ENCODE measurements at regions of chr7 and their contacts with region 1.

Region 1: GRCh38 chr7:1137510-1138167 is 22.4 kb downstream of the ZFAND2A start:
- H3K4me3 ChIP-seq: peak overlapping the region; percentile 74
- H3K27ac ChIP-seq: peak overlapping the region; percentile 13; the same call in 1 of the 2 replicates
- H3K4me1 ChIP-seq: no peaks in the 10 kb centered on the region; the same call in 1 of the 2 replicates
- CTCF ChIP-seq: no peak

Region 2: DNA sequence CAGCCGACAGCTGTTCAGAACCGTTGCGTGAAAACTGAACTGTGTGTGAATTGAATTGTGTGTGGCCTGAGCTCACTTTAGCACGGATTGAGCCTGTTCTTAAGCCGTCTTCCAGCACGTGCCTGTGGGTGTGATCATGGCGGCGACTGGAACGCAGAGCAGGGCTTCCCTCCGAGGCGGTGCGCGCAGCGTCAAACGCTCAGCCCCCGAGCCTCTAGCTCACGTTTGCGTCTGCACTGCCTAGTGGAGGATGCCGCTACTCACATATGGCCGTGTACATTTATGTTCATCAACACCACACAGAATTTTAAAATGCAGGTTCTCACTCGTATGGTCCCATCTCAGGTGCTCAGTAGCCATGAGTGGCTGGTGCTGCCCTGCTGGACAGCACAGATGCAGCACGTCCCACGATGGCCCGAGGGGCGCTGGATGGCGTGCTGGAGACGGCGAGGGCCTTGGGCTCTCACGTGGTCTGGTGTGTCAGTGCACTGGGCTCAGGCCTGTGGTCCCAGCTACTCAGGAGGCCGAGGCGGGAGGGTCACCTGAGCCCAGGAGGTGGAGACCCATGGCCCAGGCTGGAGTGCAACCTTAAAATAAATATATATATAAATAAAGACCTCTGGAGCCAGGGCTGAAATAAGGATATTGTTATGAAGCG is 283.4 kb before region 1 on chr7:
- CTCF ChIA-PET with region 1: no interaction called
- POLR2A ChIA-PET with region 1: no interaction called
- H3K4me3 ChIP-seq: no peak overlapping the region
- H3K27ac ChIP-seq: no peak overlapping the region
- H3K4me1 ChIP-seq: no peaks in the 10 kb centered on the region
- CTCF ChIP-seq: no peak

Region 3: GRCh38 chr7:1086588-1087464 is 50.8 kb before region 1 on chr7:
- CTCF ChIA-PET with region 1: interaction called, 11 read pairs
- POLR2A ChIA-PET with region 1: interaction called, 4 read pairs
- H3K4me3 ChIP-seq: no peak overlapping the region; the same call in 1 of the 2 replicates
- H3K27ac ChIP-seq: peak overlapping the region; percentile 43; the same call in 1 of the 2 replicates
- H3K4me1 ChIP-seq: peaks cover 21% of the 10 kb centered on the region
- CTCF ChIP-seq: peak; percentile 81

Measured in HEK293 (cell line).